Right lobe of liver (tissue), 6 donors: ENCODE measurements at regions of chr10 and their contacts with region 1.

Region 1: GRCh38 chr10:30534465-30535144 is 94.9 kb downstream of the LYZL2 start:
- DNase-seq: peak; percentile 37 to 69 (median 57)
- ATAC-seq: peak; percentile 59 to 85 (median 82)
- H3K4me3 ChIP-seq: no peak overlapping the region
- H3K27ac ChIP-seq: no peak overlapping the region
- H3K4me1 ChIP-seq: peaks cover 0 to 32% (median 13%) of the 10 kb centered on the region in 4 donors
- H3K27me3 ChIP-seq: no peaks in the 10 kb centered on the region
- CTCF ChIP-seq: peak; percentile 85 to 92 (median 86)
- POLR2A ChIP-seq: no peak

Region 2: DNA sequence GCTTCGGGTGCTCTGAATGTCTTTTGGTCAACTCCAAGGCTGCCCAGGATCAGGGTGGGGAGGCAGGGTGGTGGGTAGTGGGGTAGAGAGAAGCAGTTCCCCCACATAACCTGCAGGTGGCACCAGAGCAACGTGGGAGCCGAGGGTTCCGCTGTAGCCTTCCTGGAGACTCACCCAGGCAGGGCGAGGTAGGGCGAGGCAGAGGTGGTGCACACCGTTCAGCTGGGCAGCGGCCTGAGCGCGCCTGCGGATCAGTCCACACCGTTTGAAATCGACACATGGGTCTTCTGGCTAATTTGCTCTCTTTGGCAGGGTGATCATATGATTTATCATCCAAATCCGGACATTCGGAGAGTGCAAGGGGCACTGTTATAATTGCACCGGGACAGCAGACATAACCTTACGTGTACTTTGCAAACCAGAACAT is 142.0 kb before region 1 on chr10:
- intact Hi-C with region 1: loop called in 1 of 2 experiments (anchors 10 kb)
- DNase-seq: peak; percentile 78 to 82 (median 78)
- ATAC-seq: peak; percentile 100
- H3K4me3 ChIP-seq: no peak overlapping the region
- H3K27ac ChIP-seq: no peak overlapping the region
- H3K4me1 ChIP-seq: peaks cover 0 to 3% (median 0%) of the 10 kb centered on the region in 4 donors
- H3K27me3 ChIP-seq: no peaks in the 10 kb centered on the region
- CTCF ChIP-seq: peak; percentile 82 to 91 (median 90)
- POLR2A ChIP-seq: no peak

Region 3: GRCh38 chr10:30422981-30423654 is 111.5 kb before region 1 on chr10:
- intact Hi-C with region 1: loop called in 1 of 2 experiments (anchors 10 kb)
- DNase-seq: no peak
- ATAC-seq: peak in 3 of 4 donors; percentile 40 to 48 (median 48)
- H3K4me3 ChIP-seq: no peak overlapping the region
- H3K27ac ChIP-seq: no peak overlapping the region
- H3K4me1 ChIP-seq: no peaks in the 10 kb centered on the region
- H3K27me3 ChIP-seq: no peaks in the 10 kb centered on the region
- CTCF ChIP-seq: no peak
- POLR2A ChIP-seq: no peak